ENCODE measurements at regions of chr9 and their contacts with region 1.

Region 1: DNA sequence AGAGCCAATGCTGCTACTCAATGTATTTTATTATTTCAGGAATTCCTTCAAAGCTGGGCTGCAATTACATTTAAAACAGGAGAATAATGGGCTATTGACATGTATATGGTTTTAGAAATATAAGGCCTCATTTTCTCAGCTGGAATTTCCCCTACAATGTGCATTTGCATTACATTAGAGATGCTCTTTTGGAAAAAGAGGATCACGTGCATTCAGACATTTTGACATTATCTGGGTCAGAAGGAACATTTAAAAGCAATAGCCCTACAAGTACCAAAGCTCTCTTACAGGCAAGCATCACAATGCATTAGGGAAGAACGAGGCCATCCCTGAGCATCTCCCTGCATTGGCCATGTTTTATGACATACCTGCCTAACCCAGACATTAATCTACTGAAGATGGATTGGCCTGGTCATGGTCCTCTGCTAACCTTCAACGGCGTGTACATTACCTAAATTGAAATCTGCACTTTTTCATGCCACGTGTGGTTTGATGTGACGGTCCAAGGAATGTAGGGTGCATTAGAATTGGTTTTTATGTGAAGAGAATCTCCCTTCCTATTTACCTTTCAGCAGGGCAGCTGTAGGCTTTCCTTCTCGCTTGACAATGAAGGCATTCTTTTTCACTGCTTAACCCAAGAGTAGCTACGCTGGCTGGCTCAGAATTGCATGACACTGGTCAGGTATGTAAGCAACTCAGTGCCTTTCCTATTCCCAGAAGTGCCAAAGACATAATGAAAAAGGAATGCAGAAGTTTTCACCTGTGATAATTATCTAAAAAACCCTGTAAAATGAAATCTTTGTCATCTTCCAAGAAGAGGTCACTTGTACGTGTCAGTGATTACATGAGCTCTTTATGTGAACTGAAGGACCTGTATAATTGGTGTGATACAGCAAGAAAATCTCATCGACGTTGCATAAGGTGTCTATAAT is 212.3 kb upstream of the MPDZ start:
- DNase-seq: no peak
- ATAC-seq: no peak

Region 2: DNA sequence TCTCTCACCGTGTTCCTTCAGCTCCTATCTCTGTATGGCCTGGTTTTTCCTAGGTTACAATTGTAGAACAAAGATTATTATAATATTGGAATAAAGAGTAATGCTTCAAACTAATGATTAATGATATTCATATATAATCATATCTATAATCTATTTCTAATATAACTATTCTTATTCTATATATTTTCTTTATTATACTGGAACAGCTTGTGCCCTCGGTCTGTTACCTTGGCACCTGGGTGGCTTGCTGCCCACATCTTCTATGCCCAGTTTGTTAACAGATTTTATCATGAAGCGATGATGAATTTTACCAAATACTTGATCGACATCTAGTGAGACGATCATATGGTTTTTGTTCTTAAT is 1162.2 kb before region 1 on chr9:
- intact Hi-C with region 1: loop called (anchors 5 kb)
- DNase-seq: no peak
- ATAC-seq: no peak

Region 3: GRCh38 chr9:13513716-13514444 is 22.1 kb after region 1 on chr9:
- intact Hi-C with region 1: no loop called
- DNase-seq: no peak
- ATAC-seq: peak; percentile 69